ENCODE measurements at regions of chr2 and their contacts with region 1.

Region 1: GRCh38 chr2:36952748-36953197 is 13.6 kb downstream of the STRN start:
- DNase-seq: no peak
- H3K4me3 ChIP-seq: no peak overlapping the region
- H3K4me3 Mint-ChIP-seq: no peak overlapping the region
- H3K27ac ChIP-seq: no peak overlapping the region
- H3K27ac Mint-ChIP-seq: peak overlapping the region in 3 of 8 donors; percentile 5 to 43 (median 17)
- H3K4me1 ChIP-seq: peaks cover 9% of the 10 kb centered on the region
- H3K4me1 Mint-ChIP-seq: peaks cover 50 to 77% (median 66%) of the 10 kb centered on the region in 3 donors
- H3K27me3 ChIP-seq: no peaks in the 10 kb centered on the region
- H3K27me3 Mint-ChIP-seq: no peaks in the 10 kb centered on the region

Region 2: GRCh38 chr2:38815614-38816479 is 1863.1 kb after region 1 on chr2:
- CTCF ChIA-PET with region 1: no interaction called
- POLR2A ChIA-PET with region 1: interaction called, 10 read pairs
- DNase-seq: no peak
- H3K4me3 ChIP-seq: no peak overlapping the region
- H3K4me3 Mint-ChIP-seq: no peak overlapping the region
- H3K27ac ChIP-seq: no peak overlapping the region
- H3K27ac Mint-ChIP-seq: peak overlapping the region in 2 of 8 donors; percentile 7 to 65
- H3K4me1 ChIP-seq: no peaks in the 10 kb centered on the region
- H3K4me1 Mint-ChIP-seq: no peaks in the 10 kb centered on the region
- H3K27me3 ChIP-seq: no peaks in the 10 kb centered on the region
- H3K27me3 Mint-ChIP-seq: no peaks in the 10 kb centered on the region

Measured in CD8-positive, alpha-beta memory T cell (primary cell).